ENCODE measurements at regions of chr2 and their contacts with region 1.

Region 1: GRCh38 chr2:158753641-158754611 is 41.2 kb upstream of the DAPL1 start:
- DNase-seq: peak in 12 of 35 experiments; percentile 2 to 63 (median 12)
- ATAC-seq: peak in 3 of 4 experiments; percentile 52 to 68 (median 54)
- H3K4me3 ChIP-seq: no peak overlapping the region
- H3K4me3 Mint-ChIP-seq: no peak overlapping the region
- H3K27ac ChIP-seq: no peak overlapping the region
- H3K27ac Mint-ChIP-seq: no peak overlapping the region
- H3K4me1 ChIP-seq: no peaks in the 10 kb centered on the region
- H3K4me1 Mint-ChIP-seq: no peaks in the 10 kb centered on the region
- H3K27me3 ChIP-seq: peaks cover 0 to 12% of the 10 kb centered on the region in 2 experiments
- H3K27me3 Mint-ChIP-seq: peaks cover 12 to 13% of the 10 kb centered on the region in 2 donors

Region 2: GRCh38 chr2:158179660-158180059 is 574.3 kb before region 1 on chr2:
- CTCF ChIA-PET with region 1: interaction called, 6 to 17 read pairs
- POLR2A ChIA-PET with region 1: no interaction called
- DNase-seq: peak in 1 of 35 experiments; percentile 17
- ATAC-seq: no peak
- H3K4me3 ChIP-seq: no peak overlapping the region
- H3K4me3 Mint-ChIP-seq: no peak overlapping the region
- H3K27ac ChIP-seq: no peak overlapping the region
- H3K27ac Mint-ChIP-seq: no peak overlapping the region
- H3K4me1 ChIP-seq: no peaks in the 10 kb centered on the region
- H3K4me1 Mint-ChIP-seq: no peaks in the 10 kb centered on the region
- H3K27me3 ChIP-seq: peaks cover 0 to 4% of the 10 kb centered on the region in 2 experiments
- H3K27me3 Mint-ChIP-seq: peaks cover 34 to 36% of the 10 kb centered on the region in 2 donors

Region 3: GRCh38 chr2:158716121-158716771 is 37.7 kb before region 1 on chr2:
- CTCF ChIA-PET with region 1: no interaction called
- POLR2A ChIA-PET with region 1: no interaction called
- DNase-seq: no peak
- ATAC-seq: no peak
- H3K4me3 ChIP-seq: no peak overlapping the region
- H3K4me3 Mint-ChIP-seq: no peak overlapping the region
- H3K27ac ChIP-seq: no peak overlapping the region
- H3K27ac Mint-ChIP-seq: no peak overlapping the region
- H3K4me1 ChIP-seq: no peaks in the 10 kb centered on the region
- H3K4me1 Mint-ChIP-seq: no peaks in the 10 kb centered on the region
- H3K27me3 ChIP-seq: peaks cover 0 to 12% of the 10 kb centered on the region in 2 experiments
- H3K27me3 Mint-ChIP-seq: peaks cover 8 to 13% of the 10 kb centered on the region in 2 donors